ENCODE measurements at regions of chr6 and their contacts with region 1.

Region 1: GRCh38 chr6:25556516-25556915 is 95.5 kb upstream of the SCGN start:
- DNase-seq: peak; percentile 49 to 94 (median 83)

Region 2: GRCh38 chr6:25266456-25267100 is 289.9 kb before region 1 on chr6:
- intact Hi-C with region 1: loop called (anchors 5 kb)
- DNase-seq: no peak

Region 3: GRCh38 chr6:25637960-25638434 is 81.5 kb after region 1 on chr6:
- intact Hi-C with region 1: no loop called
- DNase-seq: no peak